Activated CD8-positive, alpha-beta T cell treated with anti-CD3 and anti-CD28 coated beads, Interleukin-2, amount 10 ng/mL, durations not matched to agents 7 days and 5 days (primary cell): ENCODE measurements at regions of chr5 and their contacts with region 1.

Region 1: DNA sequence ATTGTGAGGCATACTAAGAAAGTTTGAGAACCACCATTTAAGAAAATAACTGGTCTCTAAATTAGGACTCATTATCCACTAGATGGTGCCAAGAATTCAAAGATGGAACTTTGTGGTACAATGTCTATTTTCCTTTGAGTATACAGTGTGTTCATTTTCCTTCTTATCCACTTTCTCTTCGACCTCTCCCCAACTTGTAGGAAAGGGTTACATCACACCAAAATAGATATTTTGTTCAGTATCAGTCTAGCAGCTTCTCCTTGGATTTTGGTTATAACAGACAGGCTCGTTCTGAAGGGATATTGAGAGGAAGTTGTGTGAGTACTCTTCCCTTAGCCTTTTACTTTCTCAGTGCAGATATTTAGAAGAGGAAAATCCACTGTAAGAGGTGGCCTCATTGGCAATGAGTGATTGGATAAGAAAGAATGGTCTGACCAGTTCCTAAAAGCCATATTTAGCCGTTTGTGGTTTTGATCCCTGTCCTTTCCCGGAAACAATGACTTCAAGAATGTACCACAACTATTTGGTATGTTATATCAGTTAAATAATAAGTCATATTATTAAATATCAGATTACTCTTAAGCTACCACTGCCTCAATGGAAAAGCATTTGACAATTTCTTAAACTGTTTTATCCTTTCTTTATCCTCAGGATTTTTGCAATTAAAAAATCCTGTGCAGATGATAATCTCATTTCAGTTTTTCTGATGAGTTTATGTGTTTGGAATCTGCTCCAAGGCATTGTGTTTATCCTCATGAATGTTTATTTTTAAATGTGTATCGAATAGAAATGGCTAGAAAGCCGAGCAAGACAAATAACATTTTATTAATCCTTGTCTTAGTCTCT is 69.0 kb upstream of the GRAMD2B start:
- DNase-seq: no peak
- ATAC-seq: peak; percentile 67
- H3K4me3 Mint-ChIP-seq: peak overlapping the region; percentile 2
- H3K27ac Mint-ChIP-seq: no peak overlapping the region
- H3K4me1 Mint-ChIP-seq: peaks cover 18% of the 10 kb centered on the region
- H3K27me3 Mint-ChIP-seq: peaks cover 3% of the 10 kb centered on the region

Region 2: GRCh38 chr5:126339215-126339805 is 14.9 kb before region 1 on chr5:
- CTCF ChIA-PET with region 1: interaction called, 18 read pairs
- POLR2A ChIA-PET with region 1: interaction called, 3 read pairs
- DNase-seq: peak; percentile 73
- ATAC-seq: no peak
- H3K4me3 Mint-ChIP-seq: no peak overlapping the region
- H3K27ac Mint-ChIP-seq: no peak overlapping the region
- H3K4me1 Mint-ChIP-seq: no peaks in the 10 kb centered on the region
- H3K27me3 Mint-ChIP-seq: peaks cover 12% of the 10 kb centered on the region

Region 3: DNA sequence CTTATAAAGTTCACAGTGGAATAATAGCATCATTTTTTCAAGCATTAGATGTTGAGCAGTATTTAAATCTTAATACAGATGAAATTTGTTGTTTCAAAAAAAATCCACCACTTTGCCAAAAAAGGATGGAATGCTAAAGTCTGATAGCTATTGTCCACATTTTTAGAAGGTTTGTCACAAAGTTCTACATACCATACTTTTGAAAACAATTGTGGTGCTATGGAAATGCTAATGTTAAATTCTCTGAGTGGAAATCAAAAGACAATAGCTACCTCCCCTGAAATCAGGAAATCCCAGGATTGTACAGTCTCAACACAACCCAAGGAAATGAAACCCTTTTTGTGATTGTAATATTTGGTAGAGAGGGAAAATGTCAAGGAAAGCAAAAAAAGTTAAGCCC is 49.6 kb after region 1 on chr5:
- CTCF ChIA-PET with region 1: no interaction called
- POLR2A ChIA-PET with region 1: no interaction called
- DNase-seq: no peak
- ATAC-seq: no peak
- H3K4me3 Mint-ChIP-seq: no peak overlapping the region
- H3K27ac Mint-ChIP-seq: no peak overlapping the region
- H3K4me1 Mint-ChIP-seq: no peaks in the 10 kb centered on the region
- H3K27me3 Mint-ChIP-seq: peaks cover 2% of the 10 kb centered on the region

Region 4: GRCh38 chr5:126776497-126777256 is 422.4 kb after region 1 on chr5 and contains the start of gene LMNB1:
- CTCF ChIA-PET with region 1: no interaction called
- POLR2A ChIA-PET with region 1: no interaction called
- DNase-seq: peak; percentile 97
- ATAC-seq: peak; percentile 75
- H3K4me3 Mint-ChIP-seq: peak within 1 kb of the TSS; percentile 96
- H3K27ac Mint-ChIP-seq: peak within 1 kb of the TSS; percentile 98
- H3K4me1 Mint-ChIP-seq: peaks cover 39% of the 10 kb centered on the region
- H3K27me3 Mint-ChIP-seq: no peaks in the 10 kb centered on the region
- total RNA-seq, gene LMNB1: 384 to 396 TPM